ENCODE measurements at regions of chr2 and their contacts with region 1.

Region 1: GRCh38 chr2:202185816-202186221 is 52.6 kb downstream of the SUMO1 start:
- DNase-seq: peak; percentile 54
- H3K4me3 ChIP-seq: no peak overlapping the region
- H3K27ac ChIP-seq: peak overlapping the region; percentile 28
- H3K4me1 ChIP-seq: peaks cover 10% of the 10 kb centered on the region
- H3K27me3 ChIP-seq: no peaks in the 10 kb centered on the region

Region 2: DNA sequence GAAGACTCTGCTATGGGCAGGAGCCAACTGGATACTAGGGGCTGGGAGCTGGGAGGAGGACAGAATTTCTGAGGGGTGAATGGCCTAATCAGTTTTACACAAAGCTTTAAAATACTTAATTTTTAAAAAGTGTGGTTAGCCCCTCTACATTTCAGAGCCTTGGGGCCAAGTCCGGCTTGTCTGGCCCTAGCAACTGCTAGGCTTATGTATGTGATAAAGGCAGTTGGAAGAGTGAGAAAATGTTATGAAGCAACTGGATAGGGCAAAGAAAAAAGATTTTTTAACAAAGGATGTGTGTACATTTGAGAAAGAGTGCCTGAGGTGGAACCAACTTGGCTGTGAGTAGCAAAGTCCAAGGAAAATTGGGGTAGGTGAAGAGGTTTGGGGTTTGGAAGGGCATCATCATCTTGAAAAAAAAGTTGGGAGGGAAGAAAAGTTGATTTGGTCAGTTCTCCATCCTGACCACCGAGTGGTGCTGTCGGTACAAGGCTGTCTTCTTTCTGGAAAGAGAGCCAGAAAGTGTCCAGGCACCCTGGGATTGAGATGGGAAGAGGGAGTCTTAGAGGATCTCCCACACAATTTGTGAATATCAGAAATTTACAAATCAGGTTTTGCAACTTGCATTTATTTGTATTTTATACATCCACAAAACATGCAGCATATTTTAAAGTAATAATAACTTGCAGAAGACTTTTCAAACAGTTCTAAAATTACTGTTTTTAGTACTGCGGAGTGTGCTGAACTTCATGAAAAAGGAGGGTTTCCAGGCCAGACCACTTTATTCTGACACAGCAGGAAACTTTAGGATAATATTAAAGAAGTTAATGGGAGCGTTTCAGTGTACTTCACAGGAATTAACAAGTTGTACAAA is 390.0 kb before region 1 on chr2:
- in situ Hi-C with region 1: loop called (anchors 10 kb)
- DNase-seq: peak; percentile 75
- H3K4me3 ChIP-seq: no peak overlapping the region
- H3K27ac ChIP-seq: no peak overlapping the region
- H3K4me1 ChIP-seq: peaks cover 41% of the 10 kb centered on the region
- H3K27me3 ChIP-seq: no peaks in the 10 kb centered on the region

Region 3: DNA sequence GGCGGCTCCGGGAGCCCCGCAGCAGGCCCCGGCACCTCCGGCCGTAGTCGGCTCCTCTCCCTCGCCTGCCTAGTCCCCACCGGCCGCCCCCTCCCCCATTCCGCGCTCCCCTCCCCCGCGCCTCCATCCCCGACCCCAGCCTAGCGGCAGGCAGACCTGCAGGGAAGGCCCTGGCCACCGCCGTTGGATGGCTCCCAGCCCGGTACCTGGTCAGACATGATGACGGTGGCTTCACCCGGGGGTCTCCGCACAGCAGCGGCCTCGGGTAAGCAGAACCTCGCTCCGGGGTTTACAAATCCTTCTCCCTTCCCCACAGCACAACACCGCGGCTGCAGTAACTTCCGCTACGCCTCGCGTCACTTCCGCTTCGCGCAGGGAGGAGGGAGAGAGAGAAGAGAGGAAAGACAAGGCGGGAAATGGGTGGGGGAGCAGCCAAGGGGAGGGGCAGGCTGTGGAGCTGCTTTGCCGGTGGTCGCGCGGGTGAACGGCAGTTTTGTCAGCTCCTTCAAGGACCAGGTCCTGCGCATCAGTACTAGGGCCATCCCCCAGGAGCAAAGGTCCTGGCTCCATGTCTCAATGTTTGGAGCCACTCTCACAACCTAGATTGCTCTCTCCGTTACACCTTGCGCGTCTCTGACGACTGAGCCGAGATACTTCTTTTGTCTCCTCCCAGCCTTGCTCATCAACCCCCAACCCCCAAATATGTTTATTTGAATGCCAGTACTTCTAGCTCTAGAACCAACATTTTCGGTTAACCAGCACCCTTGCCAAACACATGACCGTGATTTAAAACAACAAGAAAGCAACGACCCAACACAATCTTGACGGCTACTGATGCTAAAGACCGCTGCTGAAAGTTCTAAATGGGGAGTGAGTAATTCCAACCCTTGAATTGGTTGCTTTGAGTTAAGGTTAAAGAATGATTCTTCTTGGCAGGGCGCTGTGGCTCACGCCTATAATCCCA is 52.7 kb after region 1 on chr2 and contains the start of gene SUMO1:
- in situ Hi-C with region 1: no loop called
- DNase-seq: peak; percentile 92
- H3K4me3 ChIP-seq: peak within 1 kb of the TSS; percentile 96
- H3K27ac ChIP-seq: peak within 1 kb of the TSS; percentile 82
- H3K4me1 ChIP-seq: peaks cover 10% of the 10 kb centered on the region
- H3K27me3 ChIP-seq: no peaks in the 10 kb centered on the region
- total RNA-seq, gene SUMO1: 157 TPM in 2 replicates

Region 4: DNA sequence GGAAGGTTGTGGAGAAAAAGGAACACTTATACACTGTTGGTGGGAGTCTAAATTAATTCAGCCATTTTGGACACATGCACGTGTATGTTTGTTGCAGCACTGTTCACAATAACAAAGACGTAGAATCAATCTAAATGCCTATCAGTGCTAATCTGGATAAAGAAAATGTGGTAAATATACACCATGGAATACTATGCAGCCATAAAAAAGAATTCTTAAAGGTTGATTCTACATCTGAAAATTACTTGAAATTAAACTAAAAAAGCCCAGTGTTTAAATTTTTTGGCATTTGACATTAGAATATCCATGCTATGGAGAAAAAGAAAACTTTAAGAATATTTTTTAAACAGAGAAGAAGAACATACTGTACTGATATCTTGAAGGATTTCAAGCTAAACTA is 274.3 kb after region 1 on chr2:
- in situ Hi-C with region 1: no loop called
- DNase-seq: no peak
- H3K4me3 ChIP-seq: no peak overlapping the region
- H3K27ac ChIP-seq: no peak overlapping the region
- H3K4me1 ChIP-seq: no peaks in the 10 kb centered on the region
- H3K27me3 ChIP-seq: no peaks in the 10 kb centered on the region